WTC11 (cell line): ENCODE measurements at regions of chr4 and their contacts with region 1.

Region 1: GRCh38 chr4:47836641-47837093 is 1.2 kb downstream of the CORIN start:
- DNase-seq: peak; percentile 88
- ATAC-seq: peak; percentile 87
- H3K4me3 Mint-ChIP-seq: peak overlapping the region; percentile 84
- H3K27ac Mint-ChIP-seq: 0 out of 2 replicates have a peak overlapping the region, but pooled peaks have one; percentile 27
- H3K4me1 Mint-ChIP-seq: peaks cover 28% of the 10 kb centered on the region
- H3K27me3 Mint-ChIP-seq: peaks cover 10% of the 10 kb centered on the region; the same call in 1 of the 2 replicates
- CTCF ChIP-seq: peak; percentile 50

Region 2: DNA sequence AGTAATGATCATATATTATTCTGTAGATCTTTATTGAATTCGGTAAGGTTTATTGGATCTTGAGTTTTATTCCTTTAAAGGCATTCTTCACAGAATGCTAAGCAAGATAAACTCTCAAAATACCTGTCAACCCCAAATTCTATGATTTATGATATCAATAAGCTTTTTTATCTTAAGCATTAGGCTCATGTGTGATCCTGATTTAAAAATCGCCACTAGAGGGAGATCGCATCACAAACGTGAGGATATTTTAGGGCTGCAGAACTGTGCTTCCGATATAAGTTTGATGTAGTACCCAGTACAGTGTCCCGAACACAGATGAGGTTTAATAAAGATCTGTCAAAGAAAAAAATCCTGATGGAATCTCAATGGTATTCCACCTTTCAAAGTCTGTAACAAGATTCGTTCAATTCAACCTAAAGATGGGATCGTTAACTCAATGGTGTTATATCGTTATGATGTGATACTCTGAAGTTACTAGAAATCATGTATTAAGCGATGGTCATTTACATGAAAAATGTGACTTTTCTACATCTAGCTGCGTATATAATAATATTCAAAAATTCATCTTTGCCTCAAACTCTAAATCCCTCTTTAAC is 167.8 kb before region 1 on chr4:
- CTCF ChIA-PET with region 1: interaction called, 25 read pairs
- POLR2A ChIA-PET with region 1: no interaction called
- DNase-seq: no peak
- ATAC-seq: 0 out of 2 replicates have a peak, but pooled peaks have one; percentile 43
- H3K4me3 Mint-ChIP-seq: no peak overlapping the region
- H3K27ac Mint-ChIP-seq: no peak overlapping the region
- H3K4me1 Mint-ChIP-seq: peaks cover 6% of the 10 kb centered on the region
- H3K27me3 Mint-ChIP-seq: no peaks in the 10 kb centered on the region; the same call in 1 of the 2 replicates
- CTCF ChIP-seq: peak; percentile 50; the same call in 1 of the 2 replicates

Region 3: DNA sequence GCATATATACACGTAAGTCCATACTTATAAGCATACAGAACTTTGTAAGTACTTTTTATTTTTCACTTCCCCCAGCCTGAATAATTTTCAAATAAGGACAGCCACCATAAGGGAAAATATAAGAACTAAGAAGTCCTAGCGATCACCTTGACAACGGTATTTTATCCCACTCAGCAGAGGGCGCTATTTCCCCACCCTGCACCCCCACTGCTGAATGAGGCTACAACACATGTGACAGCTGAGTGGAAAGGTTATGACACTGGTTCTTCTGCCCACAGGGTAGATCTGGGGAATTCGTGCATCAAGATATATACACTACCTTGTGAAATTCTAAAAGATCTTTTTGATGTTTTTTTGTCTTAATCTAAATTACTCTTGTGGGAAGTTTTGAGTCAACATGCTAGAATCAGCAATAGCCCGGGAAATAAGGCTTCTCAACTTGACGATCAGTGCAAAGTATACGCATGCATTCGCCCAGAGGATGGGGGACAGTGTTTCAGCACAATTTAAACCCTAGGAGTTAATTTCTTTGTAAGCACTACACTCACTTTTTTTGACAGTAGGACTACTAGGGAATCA is 150.3 kb before region 1 on chr4:
- CTCF ChIA-PET with region 1: interaction called, 83 read pairs
- POLR2A ChIA-PET with region 1: no interaction called
- DNase-seq: peak; percentile 73
- ATAC-seq: peak; percentile 94
- H3K4me3 Mint-ChIP-seq: no peak overlapping the region
- H3K27ac Mint-ChIP-seq: no peak overlapping the region
- H3K4me1 Mint-ChIP-seq: no peaks in the 10 kb centered on the region
- H3K27me3 Mint-ChIP-seq: no peaks in the 10 kb centered on the region; the same call in 1 of the 2 replicates
- CTCF ChIP-seq: peak; percentile 74

Region 4: GRCh38 chr4:47715716-47716416 is 120.8 kb before region 1 on chr4:
- CTCF ChIA-PET with region 1: interaction called, 470 read pairs
- POLR2A ChIA-PET with region 1: no interaction called
- DNase-seq: no peak
- ATAC-seq: no peak
- H3K4me3 Mint-ChIP-seq: no peak overlapping the region
- H3K27ac Mint-ChIP-seq: no peak overlapping the region
- H3K4me1 Mint-ChIP-seq: peaks cover 36% of the 10 kb centered on the region
- H3K27me3 Mint-ChIP-seq: peaks cover 2% of the 10 kb centered on the region; the same call in 1 of the 2 replicates
- CTCF ChIP-seq: no peak

Region 5: GRCh38 chr4:47729131-47729680 is 107.5 kb before region 1 on chr4:
- CTCF ChIA-PET with region 1: interaction called, 34 read pairs
- POLR2A ChIA-PET with region 1: no interaction called
- DNase-seq: no peak
- ATAC-seq: no peak
- H3K4me3 Mint-ChIP-seq: no peak overlapping the region
- H3K27ac Mint-ChIP-seq: no peak overlapping the region
- H3K4me1 Mint-ChIP-seq: peaks cover 2% of the 10 kb centered on the region; the same call in 1 of the 2 replicates
- H3K27me3 Mint-ChIP-seq: no peaks in the 10 kb centered on the region
- CTCF ChIP-seq: no peak

Region 6: GRCh38 chr4:47824840-47825239 is 11.8 kb before region 1 on chr4:
- CTCF ChIA-PET with region 1: interaction called, 18 read pairs
- POLR2A ChIA-PET with region 1: no interaction called
- DNase-seq: no peak
- ATAC-seq: no peak; the same call in 1 of the 2 replicates
- H3K4me3 Mint-ChIP-seq: no peak overlapping the region
- H3K27ac Mint-ChIP-seq: no peak overlapping the region
- H3K4me1 Mint-ChIP-seq: peaks cover 3% of the 10 kb centered on the region; the same call in 1 of the 2 replicates
- H3K27me3 Mint-ChIP-seq: no peaks in the 10 kb centered on the region; the same call in 1 of the 2 replicates
- CTCF ChIP-seq: no peak

Region 7: DNA sequence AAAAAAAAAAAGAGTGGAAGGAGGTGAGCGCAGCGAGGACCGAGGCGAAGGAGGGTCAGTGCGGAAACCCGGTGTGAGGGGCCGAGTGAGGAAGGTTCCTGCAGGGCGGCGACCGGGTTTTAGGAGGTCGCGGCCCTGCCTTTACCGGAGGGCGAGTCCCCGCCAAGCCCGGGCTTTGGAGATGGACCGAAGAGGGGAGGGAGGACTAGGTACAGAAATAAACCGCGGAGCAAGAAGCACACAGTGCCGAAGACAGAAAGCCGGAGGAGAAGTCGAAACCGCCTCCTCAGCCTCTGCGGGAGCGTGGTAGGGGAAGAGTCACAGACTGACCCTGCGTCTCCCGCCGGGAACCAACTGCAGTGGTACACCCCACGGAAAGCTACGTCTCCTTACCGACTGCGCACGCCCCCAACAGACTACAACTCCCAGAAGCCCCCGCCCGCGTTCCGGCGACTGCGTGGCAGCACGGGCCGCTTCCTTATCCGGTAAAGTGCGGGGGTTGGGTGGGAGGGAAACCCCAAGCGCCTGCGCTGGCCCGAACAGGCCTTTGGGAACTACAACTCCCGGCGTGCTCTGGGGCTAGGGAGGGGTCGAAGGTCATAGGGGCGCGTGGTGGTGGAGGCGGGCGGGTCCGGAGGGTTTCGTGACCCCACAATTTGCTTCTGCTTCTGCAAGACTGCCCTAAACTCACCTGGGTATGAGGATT is 77.7 kb after region 1 on chr4 and contains the start of gene NFXL1:
- CTCF ChIA-PET with region 1: interaction called, 14 read pairs
- POLR2A ChIA-PET with region 1: no interaction called
- DNase-seq: peak; percentile 97
- ATAC-seq: peak; percentile 94
- H3K4me3 Mint-ChIP-seq: peak within 1 kb of the TSS; percentile 88
- H3K27ac Mint-ChIP-seq: peak within 1 kb of the TSS; percentile 92
- H3K4me1 Mint-ChIP-seq: peaks cover 23% of the 10 kb centered on the region
- H3K27me3 Mint-ChIP-seq: peaks cover 3% of the 10 kb centered on the region; the same call in 1 of the 2 replicates
- CTCF ChIP-seq: no peak
- total RNA-seq, gene NFXL1: 30.1 to 32.8 TPM (median 30.2 TPM) in 3 replicates

Region 8: DNA sequence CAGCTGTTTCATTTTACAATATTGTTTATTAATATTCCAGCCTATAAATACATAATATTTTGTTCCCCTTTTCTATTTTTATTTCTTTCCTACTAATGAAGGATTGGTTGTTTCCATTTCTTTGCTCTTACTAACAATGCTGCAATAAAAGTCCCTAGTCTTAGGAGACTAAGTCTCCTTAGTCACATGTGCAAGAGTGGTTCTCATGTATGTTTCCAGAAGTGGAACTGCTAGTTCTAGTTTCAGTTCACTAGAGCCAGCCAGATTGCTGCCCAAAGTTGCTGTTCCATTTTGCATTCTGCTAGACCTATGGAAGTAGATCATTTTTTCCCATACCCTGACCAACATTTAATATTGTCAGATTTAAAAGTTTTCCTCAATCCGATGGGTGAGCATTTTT is 135.5 kb after region 1 on chr4:
- CTCF ChIA-PET with region 1: no interaction called
- POLR2A ChIA-PET with region 1: no interaction called
- DNase-seq: no peak
- ATAC-seq: no peak
- H3K4me3 Mint-ChIP-seq: no peak overlapping the region
- H3K27ac Mint-ChIP-seq: no peak overlapping the region
- H3K4me1 Mint-ChIP-seq: no peaks in the 10 kb centered on the region
- H3K27me3 Mint-ChIP-seq: no peaks in the 10 kb centered on the region
- CTCF ChIP-seq: no peak